ENCODE measurements at regions of chr12 and their contacts with region 1.

Region 1: DNA sequence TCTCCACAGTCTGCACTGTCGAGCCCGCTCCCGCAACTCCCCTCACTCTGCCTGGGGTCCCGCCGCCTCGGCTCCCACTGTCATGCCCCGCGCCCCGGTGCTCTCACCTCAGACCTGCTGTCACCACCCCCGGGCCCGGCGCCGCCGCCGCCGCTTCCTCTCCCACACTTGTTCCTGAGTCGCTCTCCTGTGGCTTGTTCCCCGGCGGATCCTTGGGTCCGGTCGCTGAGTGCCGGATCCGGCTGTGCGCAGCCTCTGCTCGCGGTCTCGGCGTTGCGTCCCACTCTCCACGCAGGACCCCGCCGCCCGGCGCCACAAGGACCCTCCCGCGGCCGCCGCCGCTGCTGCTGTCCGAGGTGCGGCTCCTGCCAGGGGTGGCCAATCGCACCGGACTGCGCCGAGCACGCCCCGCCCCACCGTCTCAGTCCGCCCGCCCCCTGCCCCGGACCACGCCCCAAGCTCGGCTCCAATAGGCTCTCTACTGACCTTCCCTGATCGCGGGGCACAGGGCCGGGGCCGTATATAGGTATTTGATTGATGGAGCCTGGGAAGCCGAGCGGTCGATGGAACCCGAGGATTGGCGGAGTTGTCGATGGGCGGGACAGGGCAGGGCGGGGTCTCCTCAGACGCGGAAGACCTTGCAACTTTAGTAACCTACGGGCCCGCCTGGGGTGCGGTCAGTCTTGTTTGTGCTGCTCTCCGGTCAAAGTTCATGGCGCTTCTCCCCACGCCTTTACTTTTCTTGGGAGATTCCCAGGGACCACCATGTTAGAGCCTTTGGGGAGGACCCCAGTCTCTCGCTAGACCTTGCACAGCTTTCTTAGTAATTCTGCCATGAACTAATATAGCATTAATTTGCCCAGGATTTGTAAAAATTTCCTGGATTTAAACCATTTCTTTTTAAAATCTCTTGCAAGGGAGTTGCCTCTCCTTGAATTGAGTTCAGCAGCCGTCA is at the start of gene TAOK3:
- DNase-seq: peak; percentile 97
- ATAC-seq: peak; percentile 92
- H3K4me3 ChIP-seq: peak within 1 kb of the TSS; percentile 87
- H3K27ac ChIP-seq: peak within 1 kb of the TSS; percentile 83
- H3K4me1 ChIP-seq: peaks cover 1% of the 10 kb centered on the region; the same call in 1 of the 2 replicates
- H3K27me3 ChIP-seq: no peaks in the 10 kb centered on the region
- CTCF ChIP-seq: no peak
- POLR2A ChIP-seq: peak; percentile 90
- RAD21 ChIP-seq: no peak
- total RNA-seq, gene TAOK3: 53.0 and 54.5 TPM in 2 replicates

Region 2: DNA sequence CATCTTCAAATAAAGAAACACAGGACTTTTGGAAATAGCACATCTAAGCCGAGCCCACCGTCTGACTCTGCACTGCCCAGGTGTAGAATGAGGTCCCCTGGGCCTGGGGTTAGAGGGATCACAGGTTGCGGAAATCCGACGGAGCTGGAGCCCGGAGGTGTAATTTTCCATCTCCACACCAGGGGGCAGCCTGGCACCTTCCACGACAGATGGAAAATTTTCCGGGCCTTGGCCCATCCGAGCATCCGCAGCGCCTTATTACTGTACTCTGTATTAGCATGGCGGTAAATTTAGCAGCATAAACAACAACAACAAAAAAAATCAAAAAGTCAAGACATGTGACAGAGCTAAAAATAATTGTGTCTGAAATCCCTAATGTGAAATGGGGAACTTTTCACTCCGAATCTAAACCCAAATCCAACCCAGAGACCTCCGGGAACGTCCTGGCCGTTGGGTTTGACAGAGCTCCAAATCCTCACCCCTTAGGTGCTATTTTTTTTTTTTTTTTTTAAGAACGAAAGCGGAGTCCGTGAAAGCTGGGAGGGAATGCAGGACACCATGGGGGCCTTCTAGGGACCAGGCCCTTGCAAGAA is 497.9 kb before region 1 on chr12:
- CTCF ChIA-PET with region 1: no interaction called
- POLR2A ChIA-PET with region 1: no interaction called
- dilution Hi-C with region 1: no loop called
- in situ Hi-C with region 1: no loop called
- intact Hi-C with region 1: loop called (anchors 5 kb)
- DNase-seq: peak; percentile 35
- ATAC-seq: peak; percentile 97
- H3K4me3 ChIP-seq: no peak overlapping the region
- H3K27ac ChIP-seq: no peak overlapping the region
- H3K4me1 ChIP-seq: no peaks in the 10 kb centered on the region
- H3K27me3 ChIP-seq: no peaks in the 10 kb centered on the region; the same call in 1 of the 2 replicates
- CTCF ChIP-seq: peak; percentile 74
- POLR2A ChIP-seq: no peak
- RAD21 ChIP-seq: peak; percentile 80

Region 3: GRCh38 chr12:117967512-117967911 is 405.3 kb before region 1 on chr12:
- CTCF ChIA-PET with region 1: no interaction called
- POLR2A ChIA-PET with region 1: no interaction called
- dilution Hi-C with region 1: no loop called
- in situ Hi-C with region 1: no loop called
- intact Hi-C with region 1: no loop called
- DNase-seq: no peak
- ATAC-seq: no peak
- H3K4me3 ChIP-seq: no peak overlapping the region
- H3K27ac ChIP-seq: no peak overlapping the region
- H3K4me1 ChIP-seq: no peaks in the 10 kb centered on the region
- H3K27me3 ChIP-seq: peaks cover 13% of the 10 kb centered on the region
- CTCF ChIP-seq: no peak
- POLR2A ChIP-seq: no peak
- RAD21 ChIP-seq: no peak

Region 4: GRCh38 chr12:118061011-118061875 is 311.6 kb before region 1 on chr12 and contains the start of gene WSB2:
- CTCF ChIA-PET with region 1: no interaction called
- POLR2A ChIA-PET with region 1: no interaction called
- dilution Hi-C with region 1: no loop called
- in situ Hi-C with region 1: no loop called
- intact Hi-C with region 1: loop called (anchors 5 kb)
- DNase-seq: peak; percentile 50
- ATAC-seq: peak; percentile 59
- H3K4me3 ChIP-seq: peak within 1 kb of the TSS; percentile 66
- H3K27ac ChIP-seq: peak within 1 kb of the TSS; percentile 98
- H3K4me1 ChIP-seq: peaks cover 7% of the 10 kb centered on the region
- H3K27me3 ChIP-seq: no peaks in the 10 kb centered on the region
- CTCF ChIP-seq: no peak
- POLR2A ChIP-seq: peak; percentile 68
- RAD21 ChIP-seq: no peak
- total RNA-seq, gene WSB2: 141 and 180 TPM in 2 replicates

Region 5: DNA sequence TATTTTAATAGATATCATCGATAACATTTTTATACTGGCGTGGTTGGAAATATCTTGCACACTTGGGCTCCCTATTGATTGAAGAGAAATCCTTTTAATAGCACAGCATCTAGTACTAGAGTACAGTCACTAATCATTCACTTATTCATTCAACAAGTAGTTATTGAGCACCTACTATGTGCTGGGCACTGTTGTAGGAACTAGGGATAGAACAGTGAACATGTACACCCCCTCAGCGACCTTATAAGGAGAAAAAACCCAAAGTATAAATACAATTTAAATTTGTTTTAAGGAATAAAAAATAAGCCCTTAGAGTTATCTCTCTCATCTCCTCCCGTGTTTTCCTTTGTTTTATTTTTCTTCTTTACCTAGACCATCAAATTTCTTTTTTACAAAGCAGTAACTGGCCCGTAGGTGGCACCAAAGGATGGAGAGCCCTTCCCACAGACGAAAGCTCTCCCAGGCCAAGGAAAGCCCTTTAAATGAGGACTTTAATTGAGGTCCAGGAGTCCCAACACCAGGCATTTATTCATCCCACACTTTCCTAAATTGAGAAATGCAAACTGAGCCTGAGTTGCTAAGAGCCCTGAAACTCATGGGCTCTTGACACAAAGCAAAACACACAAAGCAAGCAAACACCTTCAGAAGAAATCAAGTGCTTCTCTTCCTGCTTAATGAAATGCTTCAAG is 207.9 kb before region 1 on chr12:
- CTCF ChIA-PET with region 1: interaction called, 13 read pairs
- POLR2A ChIA-PET with region 1: no interaction called
- dilution Hi-C with region 1: no loop called
- in situ Hi-C with region 1: no loop called
- intact Hi-C with region 1: loop called (anchors 1 kb)
- DNase-seq: peak; percentile 33
- ATAC-seq: peak; percentile 75
- H3K4me3 ChIP-seq: no peak overlapping the region
- H3K27ac ChIP-seq: no peak overlapping the region
- H3K4me1 ChIP-seq: no peaks in the 10 kb centered on the region
- H3K27me3 ChIP-seq: no peaks in the 10 kb centered on the region
- CTCF ChIP-seq: peak; percentile 48
- POLR2A ChIP-seq: no peak
- RAD21 ChIP-seq: peak; percentile 58

Region 6: DNA sequence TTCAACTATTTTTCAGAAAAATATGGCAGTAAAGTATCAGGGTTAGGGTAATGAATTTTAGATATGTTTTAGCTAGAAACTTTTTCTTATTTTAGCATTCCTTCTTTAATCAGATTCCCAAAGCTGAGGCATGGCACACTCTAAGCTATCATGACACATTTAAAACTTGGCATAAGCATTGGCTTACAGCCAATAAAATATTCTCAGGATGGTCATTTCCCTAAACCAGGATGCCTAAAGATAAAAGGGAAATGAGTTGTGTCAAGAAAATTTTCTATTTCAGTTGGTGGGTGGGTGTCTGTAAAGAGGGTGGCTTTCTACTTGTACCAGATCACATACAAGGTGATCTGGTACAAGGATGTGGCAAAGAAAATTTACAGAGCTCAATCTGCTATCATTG is 189.1 kb before region 1 on chr12:
- CTCF ChIA-PET with region 1: interaction called, 65 read pairs
- POLR2A ChIA-PET with region 1: no interaction called
- dilution Hi-C with region 1: no loop called
- in situ Hi-C with region 1: loop called (anchors 5 kb)
- intact Hi-C with region 1: loop called (anchors 1 kb)
- DNase-seq: no peak
- ATAC-seq: no peak
- H3K4me3 ChIP-seq: no peak overlapping the region
- H3K27ac ChIP-seq: no peak overlapping the region
- H3K4me1 ChIP-seq: no peaks in the 10 kb centered on the region
- H3K27me3 ChIP-seq: no peaks in the 10 kb centered on the region
- CTCF ChIP-seq: no peak
- POLR2A ChIP-seq: no peak
- RAD21 ChIP-seq: no peak

Region 7: GRCh38 chr12:118330421-118331018 is 42.3 kb before region 1 on chr12:
- CTCF ChIA-PET with region 1: interaction called, 3 read pairs
- POLR2A ChIA-PET with region 1: no interaction called
- dilution Hi-C with region 1: no loop called
- in situ Hi-C with region 1: no loop called
- intact Hi-C with region 1: loop called (anchors 5 kb)
- DNase-seq: peak; percentile 89
- ATAC-seq: peak; percentile 85
- H3K4me3 ChIP-seq: no peak overlapping the region
- H3K27ac ChIP-seq: peak overlapping the region; percentile 59; the same call in 1 of the 2 replicates
- H3K4me1 ChIP-seq: peaks cover 15% of the 10 kb centered on the region
- H3K27me3 ChIP-seq: no peaks in the 10 kb centered on the region
- CTCF ChIP-seq: no peak
- POLR2A ChIP-seq: no peak
- RAD21 ChIP-seq: no peak

Region 8: DNA sequence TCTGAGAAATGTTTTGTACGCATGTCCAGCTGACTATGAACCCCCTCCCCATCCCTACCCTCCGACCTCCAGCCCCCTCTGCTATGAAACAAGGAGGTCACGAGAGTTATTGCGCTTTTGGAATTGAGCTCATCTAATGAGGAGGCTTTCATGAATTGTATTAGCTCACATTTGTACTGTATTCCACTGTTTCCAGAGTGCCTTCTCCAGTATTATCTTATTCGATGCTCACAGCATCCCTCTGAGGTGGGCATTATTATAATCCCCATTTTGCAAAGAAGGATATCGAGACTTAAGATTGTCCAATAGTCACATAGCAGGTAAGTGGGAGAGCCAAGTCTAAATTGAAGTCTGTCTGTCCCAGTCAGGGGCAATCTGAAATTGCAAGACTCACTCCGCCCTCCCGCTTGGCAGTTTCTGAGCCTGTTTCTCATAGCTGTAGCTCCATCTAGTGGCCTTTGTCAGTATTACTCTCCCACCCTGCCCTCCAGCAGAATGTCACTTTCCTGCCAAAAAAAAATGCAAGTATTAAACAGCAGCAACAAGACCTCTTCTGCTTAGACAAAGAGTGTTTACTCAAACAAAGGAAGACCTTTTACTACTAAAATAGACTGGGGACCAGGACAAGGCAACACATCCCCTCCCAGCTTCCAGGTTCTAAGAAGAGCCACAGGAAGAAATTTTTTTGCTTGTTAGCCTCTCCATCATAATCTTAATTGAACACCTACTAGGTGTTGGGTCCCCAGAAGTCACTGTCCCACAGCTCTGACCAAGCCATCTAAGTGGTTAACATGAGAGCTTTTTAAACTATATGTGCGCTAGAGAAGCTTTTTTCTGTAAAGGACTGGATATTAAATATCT is 1172.2 kb after region 1 on chr12:
- CTCF ChIA-PET with region 1: no interaction called
- POLR2A ChIA-PET with region 1: no interaction called
- dilution Hi-C with region 1: no loop called
- in situ Hi-C with region 1: no loop called
- intact Hi-C with region 1: loop called (anchors 1 kb)
- DNase-seq: peak; percentile 70
- ATAC-seq: peak; percentile 97
- H3K4me3 ChIP-seq: no peak overlapping the region
- H3K27ac ChIP-seq: no peak overlapping the region
- H3K4me1 ChIP-seq: no peaks in the 10 kb centered on the region
- H3K27me3 ChIP-seq: no peaks in the 10 kb centered on the region
- CTCF ChIP-seq: peak; percentile 83
- POLR2A ChIP-seq: no peak
- RAD21 ChIP-seq: peak; percentile 86

Measured in IMR-90 (cell line).